Dorsolateral prefrontal cortex (tissue), 120 donors: ENCODE measurements at regions of chr10 and their contacts with region 1.

Region 1: DNA sequence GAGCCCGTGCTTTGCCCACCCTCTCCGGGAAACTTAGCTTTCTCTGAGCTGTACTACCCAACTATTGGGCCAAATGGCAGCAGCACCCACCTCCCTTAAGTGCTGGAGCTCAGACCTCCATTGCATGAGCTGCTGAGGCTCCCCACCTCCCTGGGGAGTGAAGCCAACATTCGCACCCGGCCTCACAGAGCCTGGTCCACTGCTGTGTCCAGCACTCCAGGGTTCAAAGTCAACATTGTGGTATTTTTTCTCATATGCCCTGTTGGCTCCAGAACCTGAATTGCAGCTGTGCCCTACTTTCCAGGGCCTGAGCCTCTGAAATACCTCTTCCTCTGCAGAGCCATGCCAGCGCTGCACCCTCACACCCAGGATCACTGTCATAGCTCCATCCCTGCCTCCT is 29.7 kb downstream of the ITGA8 start:
- DNase-seq: no peak
- H3K4me3 ChIP-seq: no peak overlapping the region
- H3K27ac ChIP-seq: no peak overlapping the region
- H3K27me3 ChIP-seq: peaks cover 0 to 28% (median 0%) of the 10 kb centered on the region in 45 donors
- CTCF ChIP-seq: no peak

Region 2: GRCh38 chr10:15624401-15625196 is 65.4 kb before region 1 on chr10:
- intact Hi-C with region 1: loop called in 1 of 2 experiments (anchors 5 kb)
- DNase-seq: no peak
- H3K4me3 ChIP-seq: no peak overlapping the region
- H3K27ac ChIP-seq: peak overlapping the region in 13 of 59 donors; percentile 10 to 54 (median 33)
- H3K27me3 ChIP-seq: no peaks in the 10 kb centered on the region
- CTCF ChIP-seq: no peak

Region 3: DNA sequence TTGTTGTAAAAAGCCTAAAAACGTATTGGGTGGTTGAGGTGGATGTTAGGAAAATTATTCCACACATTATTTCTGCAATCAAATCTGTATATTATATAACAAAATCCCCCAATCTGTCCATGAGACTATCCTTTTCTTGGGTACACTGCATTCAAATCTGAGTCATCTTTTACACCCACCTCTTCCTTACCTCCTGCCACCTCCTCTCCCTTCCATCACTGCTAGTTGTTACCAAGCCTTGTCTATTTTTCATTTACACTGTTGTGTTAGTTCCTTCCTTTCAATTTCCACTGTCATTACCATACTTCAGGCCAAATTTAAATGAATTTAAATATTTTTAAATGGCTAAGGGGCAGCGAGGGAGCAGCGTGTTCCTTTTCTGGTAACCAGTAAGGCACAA is 53.6 kb before region 1 on chr10:
- intact Hi-C with region 1: no loop called
- DNase-seq: no peak
- H3K4me3 ChIP-seq: no peak overlapping the region
- H3K27ac ChIP-seq: peak overlapping the region in 3 of 59 donors; percentile 7 to 41 (median 36)
- H3K27me3 ChIP-seq: no peaks in the 10 kb centered on the region
- CTCF ChIP-seq: no peak